Sigmoid colon (tissue), 7 donors: ENCODE measurements at regions of chr21 and their contacts with region 1.

Region 1: GRCh38 chr21:31088315-31088714 is 50.0 kb upstream of the KRTAP19-8 start:
- DNase-seq: no peak
- H3K4me3 ChIP-seq: no peak overlapping the region
- H3K27ac ChIP-seq: no peak overlapping the region
- H3K4me1 ChIP-seq: no peaks in the 10 kb centered on the region
- H3K27me3 ChIP-seq: no peaks in the 10 kb centered on the region
- CTCF ChIP-seq: no peak
- EP300 ChIP-seq: no peak
- POLR2A ChIP-seq: no peak

Region 2: GRCh38 chr21:30044445-30045064 is 1043.8 kb before region 1 on chr21:
- intact Hi-C with region 1: loop called (anchors 5 kb)
- DNase-seq: no peak
- H3K4me3 ChIP-seq: no peak overlapping the region
- H3K27ac ChIP-seq: no peak overlapping the region
- H3K4me1 ChIP-seq: no peaks in the 10 kb centered on the region
- H3K27me3 ChIP-seq: no peaks in the 10 kb centered on the region
- CTCF ChIP-seq: peak; percentile 8 to 70 (median 52)
- EP300 ChIP-seq: no peak
- POLR2A ChIP-seq: no peak

Region 3: DNA sequence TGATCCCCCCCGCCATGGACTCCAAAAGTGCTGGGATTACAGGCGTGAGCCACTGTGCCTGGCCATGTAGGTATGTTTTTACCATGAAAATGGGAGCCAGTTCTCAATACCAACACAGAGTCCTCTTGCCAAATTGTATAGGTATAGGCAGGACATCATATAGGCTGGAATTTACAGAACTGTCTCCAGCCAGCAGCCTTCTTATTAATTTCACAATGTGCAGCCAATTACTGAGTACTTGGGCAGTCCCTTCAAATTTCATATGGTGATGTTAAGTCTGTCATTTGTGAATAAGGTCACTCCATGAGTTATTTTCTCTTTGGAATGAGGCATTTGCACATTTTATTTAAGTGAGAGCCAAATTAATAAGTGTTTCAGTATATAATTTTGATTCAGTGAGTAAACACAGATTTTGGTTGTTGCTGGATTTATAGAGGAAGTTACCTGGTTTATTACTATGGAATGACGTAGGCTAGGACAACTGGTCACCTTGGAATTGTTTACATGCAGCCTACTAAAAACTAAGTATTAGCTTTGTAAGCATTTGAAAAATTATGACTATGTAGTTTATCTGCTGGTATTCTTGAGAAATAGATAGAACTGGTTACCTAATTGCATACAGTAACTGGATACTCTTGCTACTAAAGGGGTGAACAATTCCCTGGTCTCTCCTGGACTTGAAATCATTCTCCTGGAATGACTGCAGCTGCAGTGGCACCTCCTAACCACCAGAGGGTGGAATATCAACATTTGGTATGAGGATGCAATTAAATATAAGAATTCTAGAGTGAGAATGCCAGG is 747.7 kb before region 1 on chr21:
- intact Hi-C with region 1: loop called (anchors 5 kb)
- DNase-seq: no peak
- H3K4me3 ChIP-seq: no peak overlapping the region
- H3K27ac ChIP-seq: no peak overlapping the region
- H3K4me1 ChIP-seq: no peaks in the 10 kb centered on the region
- H3K27me3 ChIP-seq: no peaks in the 10 kb centered on the region
- CTCF ChIP-seq: peak in 3 of 4 experiments; percentile 50 to 74 (median 61)
- EP300 ChIP-seq: no peak
- POLR2A ChIP-seq: no peak